ENCODE measurements at regions of chr18 and their contacts with region 1.

Region 1: GRCh38 chr18:29351171-29351570 is 1174.2 kb upstream of the CDH2 start:
- DNase-seq: no peak
- ATAC-seq: no peak
- H3K4me3 ChIP-seq: no peak overlapping the region
- H3K27ac ChIP-seq: no peak overlapping the region
- H3K4me1 ChIP-seq: no peaks in the 10 kb centered on the region
- H3K27me3 ChIP-seq: no peaks in the 10 kb centered on the region

Region 2: GRCh38 chr18:29271496-29271895 is 79.7 kb before region 1 on chr18:
- intact Hi-C with region 1: no loop called
- DNase-seq: no peak
- ATAC-seq: no peak
- H3K4me3 ChIP-seq: no peak overlapping the region
- H3K27ac ChIP-seq: no peak overlapping the region
- H3K4me1 ChIP-seq: no peaks in the 10 kb centered on the region
- H3K27me3 ChIP-seq: no peaks in the 10 kb centered on the region

Region 3: GRCh38 chr18:29285471-29285870 is 65.7 kb before region 1 on chr18:
- intact Hi-C with region 1: loop called in 1 of 4 experiments (anchors 10 kb)
- DNase-seq: no peak
- ATAC-seq: no peak
- H3K4me3 ChIP-seq: no peak overlapping the region
- H3K27ac ChIP-seq: no peak overlapping the region
- H3K4me1 ChIP-seq: no peaks in the 10 kb centered on the region
- H3K27me3 ChIP-seq: no peaks in the 10 kb centered on the region

Region 4: GRCh38 chr18:29588440-29589100 is 237.4 kb after region 1 on chr18:
- intact Hi-C with region 1: no loop called
- DNase-seq: peak in 2 of 3 donors; percentile 18 to 37
- ATAC-seq: no peak
- H3K4me3 ChIP-seq: no peak overlapping the region
- H3K27ac ChIP-seq: no peak overlapping the region
- H3K4me1 ChIP-seq: no peaks in the 10 kb centered on the region
- H3K27me3 ChIP-seq: no peaks in the 10 kb centered on the region